Activated T-helper 1 cell treated with anti-CD3 and anti-CD28 coated beads, Interleukin-12 subunit alpha, Interleukin-12 subunit beta, Interleukin-2, Interleukin-4 antibody, amounts not matched to agents 30 ng/mL and 10 ng/mL and 1 ng/mL, durations not matched to agents 14 hours and 24 hours and 36 hours (primary cell): ENCODE measurements at regions of chr16 and their contacts with region 1.

Region 1: DNA sequence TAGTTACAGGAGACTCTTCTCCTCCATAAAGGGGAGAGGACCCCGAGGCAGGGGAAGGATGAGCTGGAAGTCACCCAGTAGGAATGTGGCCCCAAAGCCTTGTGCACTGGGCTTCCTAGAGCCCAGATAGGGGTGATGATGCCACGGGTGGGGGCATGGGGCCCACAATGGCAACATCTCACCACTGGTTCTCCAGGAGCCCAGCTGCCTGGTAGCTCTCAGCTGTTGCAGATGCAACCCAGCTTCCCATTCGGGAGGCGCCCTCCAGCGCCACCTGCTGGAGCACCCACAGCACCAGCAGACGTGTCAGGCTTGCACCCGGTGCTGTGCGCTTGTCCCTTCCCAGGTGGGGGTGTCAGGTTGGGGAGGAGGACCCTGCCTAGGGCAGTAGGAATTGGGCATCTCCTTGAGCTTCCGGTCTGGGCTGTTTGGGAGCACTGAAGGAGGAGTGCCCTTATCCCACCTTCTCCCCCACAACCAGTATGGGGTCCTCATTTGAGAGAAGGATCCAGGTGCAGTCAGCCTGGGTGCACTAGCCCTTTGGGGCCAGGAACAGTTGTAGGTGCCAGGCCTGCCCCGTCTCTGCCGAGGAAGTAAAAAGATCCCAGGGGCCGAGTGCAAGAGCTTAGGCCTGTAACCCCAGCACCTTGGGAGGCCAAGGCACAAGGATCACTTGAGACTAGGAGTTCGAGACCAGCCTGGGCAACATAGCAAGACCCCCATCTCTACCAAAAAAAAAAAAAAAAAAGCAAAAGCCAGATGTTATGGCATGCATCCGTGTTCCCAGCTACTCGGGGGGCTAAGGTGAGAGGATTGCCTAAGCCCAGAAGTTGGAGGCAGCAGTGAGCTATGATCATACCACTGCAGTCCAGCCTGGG is 14.4 kb downstream of the CDIPT start:
- DNase-seq: peak; percentile 67
- H3K4me3 Mint-ChIP-seq: no peak overlapping the region
- H3K27ac Mint-ChIP-seq: no peak overlapping the region
- H3K4me1 Mint-ChIP-seq: peaks cover 5% of the 10 kb centered on the region
- H3K27me3 Mint-ChIP-seq: no peaks in the 10 kb centered on the region

Region 2: GRCh38 chr16:29694384-29695195 is 154.1 kb before region 1 on chr16:
- intact Hi-C with region 1: loop called (anchors 2 kb)
- DNase-seq: no peak
- H3K4me3 Mint-ChIP-seq: no peak overlapping the region
- H3K27ac Mint-ChIP-seq: no peak overlapping the region
- H3K4me1 Mint-ChIP-seq: peaks cover 12% of the 10 kb centered on the region
- H3K27me3 Mint-ChIP-seq: no peaks in the 10 kb centered on the region

Region 3: DNA sequence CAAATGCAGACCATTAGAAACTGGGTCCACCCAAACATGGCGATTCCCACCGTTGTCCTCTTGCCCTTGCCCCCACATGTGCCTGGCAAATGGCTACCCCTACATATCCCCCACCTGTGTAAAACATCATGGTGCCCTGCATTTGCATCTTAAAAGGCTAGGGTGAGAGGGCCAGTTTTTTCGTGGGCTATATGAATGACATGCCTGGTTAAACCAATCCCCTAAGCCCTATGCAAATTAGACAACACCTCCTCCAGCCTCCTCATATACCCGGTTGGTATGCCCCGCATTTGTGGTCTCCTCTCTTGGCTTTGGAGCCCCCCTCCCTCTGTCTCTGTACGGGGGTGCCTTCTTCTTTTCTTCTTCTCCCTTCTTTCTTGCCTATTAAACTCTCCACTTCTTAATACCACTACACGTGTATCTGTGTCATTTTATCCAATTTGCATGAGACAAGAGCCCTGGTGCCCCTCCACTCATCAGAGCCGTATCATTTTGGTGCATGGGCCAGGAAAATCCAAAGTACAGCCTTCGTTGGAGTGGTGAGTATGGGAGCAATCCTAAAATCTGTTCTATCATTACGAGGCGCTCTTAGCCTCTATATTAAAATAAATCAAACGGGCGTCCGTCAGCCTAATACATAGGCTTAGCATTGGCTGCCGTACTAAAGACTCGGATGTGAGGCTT is 139.6 kb before region 1 on chr16:
- intact Hi-C with region 1: no loop called
- DNase-seq: no peak
- H3K4me3 Mint-ChIP-seq: no peak overlapping the region
- H3K27ac Mint-ChIP-seq: no peak overlapping the region
- H3K4me1 Mint-ChIP-seq: peaks cover 16% of the 10 kb centered on the region
- H3K27me3 Mint-ChIP-seq: peaks cover 6% of the 10 kb centered on the region

Region 4: GRCh38 chr16:29815793-29816693 is 32.6 kb before region 1 on chr16 and contains the start of gene PAGR1:
- intact Hi-C with region 1: loop called (anchors 1 kb)
- DNase-seq: peak; percentile 99
- H3K4me3 Mint-ChIP-seq: peak within 1 kb of the TSS; percentile 94
- H3K27ac Mint-ChIP-seq: peak within 1 kb of the TSS; percentile 98
- H3K4me1 Mint-ChIP-seq: peaks cover 48% of the 10 kb centered on the region
- H3K27me3 Mint-ChIP-seq: no peaks in the 10 kb centered on the region
- total RNA-seq, gene PAGR1: 29.2 and 30.8 TPM in 2 replicates

Region 5: DNA sequence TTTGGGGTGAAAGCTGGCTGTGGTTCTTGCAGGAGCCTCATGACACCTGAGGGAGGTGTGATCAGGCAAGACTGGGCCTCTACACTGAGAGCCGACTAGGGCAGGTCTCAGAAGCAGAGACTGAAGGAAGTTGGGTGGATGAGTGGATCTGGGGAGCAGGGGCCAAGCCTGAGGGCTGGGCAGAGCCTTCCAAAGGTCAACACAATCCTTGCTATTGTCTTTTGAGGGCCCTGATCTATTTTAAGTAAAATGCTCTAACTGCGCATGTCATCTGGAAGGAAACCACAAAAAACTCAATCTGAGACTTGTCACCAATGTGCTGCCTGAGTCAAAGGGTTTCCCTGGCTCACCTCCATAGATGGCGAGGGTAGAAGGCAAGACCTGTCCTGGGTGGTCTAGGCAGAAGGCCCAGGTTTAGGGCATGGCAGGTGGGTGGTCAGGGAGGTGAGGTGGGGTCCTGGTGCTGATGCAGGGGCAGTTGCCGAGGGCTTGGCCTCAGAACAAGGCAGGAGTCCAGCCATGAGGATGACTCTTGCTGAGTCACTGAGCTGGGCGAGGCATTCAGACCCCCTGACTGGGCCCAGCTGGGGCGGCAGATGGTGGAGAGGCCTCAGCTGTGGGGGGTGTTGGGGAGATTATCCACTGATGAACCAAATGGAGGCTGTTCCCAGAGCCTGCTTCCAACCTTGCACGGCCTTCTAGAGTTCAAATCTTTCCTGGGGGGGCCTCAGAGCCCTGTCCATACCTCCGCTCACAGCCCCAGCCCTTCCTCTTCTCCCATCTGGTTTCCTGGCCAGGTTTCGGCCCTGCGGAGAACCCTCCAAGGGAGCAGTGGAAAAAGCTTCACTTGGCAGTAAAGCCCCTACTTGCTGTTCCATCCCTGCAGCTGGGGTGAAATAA is 23.3 kb before region 1 on chr16:
- intact Hi-C with region 1: loop called (anchors 1 kb)
- DNase-seq: peak; percentile 50
- H3K4me3 Mint-ChIP-seq: peak overlapping the region; percentile 68
- H3K27ac Mint-ChIP-seq: peak overlapping the region; percentile 85
- H3K4me1 Mint-ChIP-seq: peaks cover 42% of the 10 kb centered on the region
- H3K27me3 Mint-ChIP-seq: no peaks in the 10 kb centered on the region

Region 6: GRCh38 chr16:29983420-29984136 is 134.9 kb after region 1 on chr16:
- intact Hi-C with region 1: no loop called
- DNase-seq: no peak
- H3K4me3 Mint-ChIP-seq: no peak overlapping the region
- H3K27ac Mint-ChIP-seq: no peak overlapping the region
- H3K4me1 Mint-ChIP-seq: no peaks in the 10 kb centered on the region
- H3K27me3 Mint-ChIP-seq: no peaks in the 10 kb centered on the region

Region 7: GRCh38 chr16:30131869-30132475 is 283.3 kb after region 1 on chr16:
- intact Hi-C with region 1: no loop called
- DNase-seq: no peak
- H3K4me3 Mint-ChIP-seq: no peak overlapping the region
- H3K27ac Mint-ChIP-seq: peak overlapping the region; percentile 70
- H3K4me1 Mint-ChIP-seq: no peaks in the 10 kb centered on the region
- H3K27me3 Mint-ChIP-seq: no peaks in the 10 kb centered on the region

Region 8: DNA sequence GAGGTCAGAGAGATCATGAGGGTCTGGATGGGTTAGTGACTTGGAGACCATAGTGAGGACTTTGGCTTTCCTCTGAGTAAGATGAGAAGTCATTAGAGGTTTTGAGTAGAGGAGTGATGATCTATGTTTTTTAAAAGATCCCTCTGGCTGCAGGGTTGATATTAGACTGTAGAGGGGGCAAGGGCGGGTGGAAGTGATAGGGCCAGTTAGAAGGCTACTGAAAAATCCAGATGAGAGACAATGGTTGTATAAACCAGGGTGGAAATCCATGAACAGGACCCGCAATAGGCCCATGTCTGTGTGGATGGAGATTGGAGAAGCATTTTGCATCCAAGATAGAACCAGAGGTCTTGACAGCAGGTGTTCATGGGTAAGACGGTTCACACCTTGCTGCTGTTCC is 633.7 kb after region 1 on chr16:
- intact Hi-C with region 1: no loop called
- DNase-seq: no peak
- H3K4me3 Mint-ChIP-seq: peak overlapping the region; percentile 13
- H3K27ac Mint-ChIP-seq: peak overlapping the region; percentile 33
- H3K4me1 Mint-ChIP-seq: peaks cover 58% of the 10 kb centered on the region
- H3K27me3 Mint-ChIP-seq: no peaks in the 10 kb centered on the region